Esophagus squamous epithelium (tissue), 5 donors: ENCODE measurements at regions of chr19 and their contacts with region 1.

Region 1: DNA sequence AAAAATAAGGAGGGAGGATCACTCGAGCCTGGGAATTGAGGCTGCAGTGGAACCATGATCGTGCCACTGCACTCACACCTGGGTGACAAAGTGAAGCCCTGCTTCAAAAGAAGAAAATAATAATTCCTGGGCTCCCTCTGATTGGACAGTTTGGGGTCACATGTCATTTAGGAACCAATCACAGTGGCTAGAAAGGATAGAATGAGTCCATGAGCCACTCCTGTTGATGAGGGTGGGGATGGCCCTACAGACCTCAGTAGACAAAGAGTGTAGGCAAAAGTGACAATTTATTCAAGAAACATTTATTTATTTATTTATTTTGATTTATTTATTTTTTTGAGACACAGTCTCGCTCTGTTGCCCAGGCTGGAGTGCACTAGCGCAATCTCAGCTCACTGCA is 26.8 kb upstream of the ADGRE5 start:
- DNase-seq: no peak
- H3K4me3 ChIP-seq: no peak overlapping the region
- H3K27ac ChIP-seq: no peak overlapping the region
- H3K4me1 ChIP-seq: peaks cover 0 to 5% (median 0%) of the 10 kb centered on the region in 3 donors
- H3K27me3 ChIP-seq: peaks cover 0 to 11% (median 0%) of the 10 kb centered on the region in 4 donors
- CTCF ChIP-seq: no peak
- POLR2A ChIP-seq: no peak

Region 2: GRCh38 chr19:14405758-14406644 is 51.6 kb after region 1 on chr19:
- intact Hi-C with region 1: loop called (anchors 10 kb)
- DNase-seq: no peak
- H3K4me3 ChIP-seq: peak overlapping the region; percentile 7 to 57 (median 31)
- H3K27ac ChIP-seq: peak overlapping the region; percentile 60 to 84 (median 78)
- H3K4me1 ChIP-seq: peaks cover 0 to 32% (median 9%) of the 10 kb centered on the region in 3 donors
- H3K27me3 ChIP-seq: no peaks in the 10 kb centered on the region
- CTCF ChIP-seq: peak; percentile 92 to 97 (median 92)
- POLR2A ChIP-seq: no peak

Region 3: DNA sequence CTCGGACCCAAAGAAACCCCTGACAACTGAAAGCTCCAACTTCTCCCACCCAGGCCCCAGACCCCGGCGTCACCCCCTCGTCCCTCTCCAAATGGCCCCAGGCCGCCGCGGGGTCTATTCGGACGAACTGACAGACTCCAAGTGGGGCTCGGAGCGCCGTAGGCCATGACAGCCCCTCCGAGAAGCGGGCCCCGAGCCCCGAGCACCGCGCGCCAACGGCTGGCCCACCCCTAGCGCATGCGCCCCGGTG is 64.3 kb after region 1 on chr19:
- intact Hi-C with region 1: no loop called
- DNase-seq: no peak
- H3K4me3 ChIP-seq: peak overlapping the region; percentile 68 to 89 (median 77)
- H3K27ac ChIP-seq: peak overlapping the region; percentile 93 to 94 (median 94)
- H3K4me1 ChIP-seq: peaks cover 18 to 53% (median 41%) of the 10 kb centered on the region in 3 donors
- H3K27me3 ChIP-seq: no peaks in the 10 kb centered on the region
- CTCF ChIP-seq: no peak
- POLR2A ChIP-seq: no peak

Region 4: DNA sequence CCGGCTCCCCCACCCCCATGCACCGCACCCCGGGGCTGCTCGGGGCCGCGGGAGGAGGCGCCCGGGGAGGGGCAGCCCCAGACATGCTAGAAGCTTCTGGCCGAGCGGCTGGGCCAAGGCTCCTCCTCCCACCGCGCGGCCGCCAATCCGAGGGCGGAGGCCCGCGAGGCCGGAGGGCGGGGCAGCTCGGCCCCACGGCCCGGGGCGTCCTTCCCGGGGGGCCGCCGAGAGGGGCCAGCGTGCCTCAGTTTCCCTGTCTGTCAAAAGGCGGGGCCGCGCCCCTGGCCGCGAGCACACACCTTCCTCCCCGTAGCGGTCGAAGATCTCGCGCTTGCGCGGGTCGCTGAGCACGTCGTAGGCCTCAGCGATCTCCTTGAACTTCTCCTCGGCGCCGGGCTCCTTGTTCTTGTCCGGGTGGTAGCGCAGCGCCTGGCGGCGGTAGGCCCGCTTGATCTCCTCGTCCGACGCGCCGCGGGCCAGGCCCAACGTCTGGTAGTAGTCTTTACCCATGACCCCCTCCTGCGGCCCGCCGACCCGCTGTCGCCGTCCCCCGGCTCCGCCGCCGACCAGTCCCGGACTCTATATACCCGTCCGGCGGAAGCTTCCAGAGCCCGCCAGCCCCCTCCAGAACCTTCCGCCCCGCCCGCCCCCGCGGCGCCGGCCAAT is 163.5 kb after region 1 on chr19 and contains the start of gene DNAJB1:
- intact Hi-C with region 1: no loop called
- DNase-seq: no peak
- H3K4me3 ChIP-seq: peak within 1 kb of the TSS; percentile 66 to 99 (median 96)
- H3K27ac ChIP-seq: peak within 1 kb of the TSS; percentile 99 to 100 (median 100)
- H3K4me1 ChIP-seq: peaks cover 24 to 87% (median 50%) of the 10 kb centered on the region in 3 donors
- H3K27me3 ChIP-seq: no peaks in the 10 kb centered on the region
- CTCF ChIP-seq: peak in 1 of 6 experiments; percentile 19
- POLR2A ChIP-seq: peak in 3 of 4 donors; percentile 96 to 98 (median 98)
- total RNA-seq, gene DNAJB1: 182 to 294 (median 224) TPM